ENCODE measurements at regions of chr2 and their contacts with region 1.

Region 1: DNA sequence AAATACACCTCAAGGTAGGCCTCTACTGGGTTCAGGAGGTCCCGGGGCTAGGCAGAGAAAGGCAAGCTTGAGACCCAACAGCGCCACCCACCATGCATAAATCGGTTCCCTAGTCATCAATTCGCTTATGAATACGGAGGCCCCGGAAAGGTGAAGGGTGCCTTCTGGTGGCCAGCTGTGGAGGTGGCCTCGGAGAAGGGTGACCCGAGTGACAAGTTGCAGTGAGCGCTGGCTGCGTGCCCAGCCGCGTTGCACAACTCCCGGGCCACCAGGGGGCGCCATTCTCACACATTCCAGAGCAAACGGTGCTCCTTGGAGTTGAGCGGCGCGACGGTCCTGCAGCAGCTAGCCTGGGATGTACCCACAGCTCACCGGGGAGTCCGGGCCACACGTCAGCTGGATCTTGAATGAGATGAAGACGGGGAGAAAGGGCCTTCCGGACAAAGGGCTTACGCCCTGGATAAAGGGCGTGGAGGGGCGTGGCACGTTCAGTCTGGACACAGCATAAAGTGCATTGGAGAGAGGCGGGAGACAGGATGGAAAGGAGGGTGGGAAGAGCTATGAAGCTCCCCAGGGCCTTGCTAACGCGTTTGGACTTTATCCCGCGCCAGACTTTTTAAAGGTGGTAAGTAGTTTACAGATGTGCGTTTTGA is 20.4 kb downstream of the TMSB10 start:
- DNase-seq: peak; percentile 99
- H3K4me3 ChIP-seq: peak overlapping the region; percentile 39 to 60 (median 43)
- H3K27ac ChIP-seq: peak overlapping the region; percentile 22 to 65 (median 45)
- H3K4me1 ChIP-seq: peaks cover 16 to 30% (median 22%) of the 10 kb centered on the region in 4 donors
- H3K27me3 ChIP-seq: no peaks in the 10 kb centered on the region
- CTCF ChIP-seq: peak; percentile 87 to 95 (median 90)
- EP300 ChIP-seq: no peak
- POLR2A ChIP-seq: no peak

Region 2: DNA sequence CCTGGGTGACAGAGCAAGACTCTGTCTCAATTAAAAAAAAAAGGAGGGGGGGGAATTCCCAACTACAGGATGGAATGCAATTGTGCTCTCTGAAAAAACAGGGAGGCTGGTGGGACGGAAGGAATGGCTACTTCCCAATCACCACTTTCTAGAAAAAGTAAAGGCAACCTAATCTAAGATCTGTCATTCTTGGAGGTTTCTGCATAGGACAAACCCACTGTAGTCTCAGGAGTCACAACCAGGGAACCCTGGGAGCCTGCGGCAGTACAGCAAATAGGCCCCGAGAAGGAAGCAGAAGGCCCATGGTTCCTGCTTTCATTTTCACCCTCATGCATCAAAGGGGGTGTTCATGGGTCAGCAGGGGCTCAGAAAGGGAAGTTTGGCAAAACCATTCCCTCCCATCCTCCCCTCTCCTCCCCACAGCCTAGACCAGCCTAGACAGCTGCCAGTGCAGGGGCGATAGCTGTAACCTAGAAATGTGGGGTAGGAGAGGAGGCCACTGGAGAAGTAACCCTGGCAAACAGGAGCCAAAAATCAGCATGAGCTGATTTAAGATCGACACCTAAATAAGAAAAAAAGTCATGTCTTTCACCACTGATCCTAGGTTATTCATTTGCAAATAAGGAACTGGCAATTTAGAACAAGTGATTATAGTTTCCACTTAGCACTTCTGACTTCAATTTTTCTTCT is 92.9 kb before region 1 on chr2:
- intact Hi-C with region 1: no loop called
- DNase-seq: no peak
- H3K4me3 ChIP-seq: no peak overlapping the region
- H3K27ac ChIP-seq: no peak overlapping the region
- H3K4me1 ChIP-seq: no peaks in the 10 kb centered on the region
- H3K27me3 ChIP-seq: no peaks in the 10 kb centered on the region
- CTCF ChIP-seq: no peak
- EP300 ChIP-seq: no peak
- POLR2A ChIP-seq: no peak

Region 3: DNA sequence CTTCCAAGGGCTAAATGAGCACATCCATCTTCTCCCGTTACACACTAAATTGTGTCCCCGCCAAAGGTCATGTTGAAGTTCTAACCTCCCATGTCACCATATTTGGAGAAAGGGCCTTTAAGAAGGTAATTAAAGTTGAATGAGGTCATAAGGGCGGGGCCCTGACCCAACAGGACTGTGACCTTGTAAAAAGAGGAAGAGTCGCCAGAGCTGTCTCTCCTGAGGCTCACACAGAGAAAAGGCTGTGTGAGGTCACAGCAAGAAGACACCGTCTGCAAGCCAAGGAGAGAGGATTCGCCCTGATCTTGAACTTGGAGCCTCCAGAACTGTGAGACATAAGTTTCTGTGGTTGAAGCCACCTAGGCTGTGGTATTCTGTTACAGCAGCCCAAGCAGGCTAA is 69.1 kb before region 1 on chr2:
- intact Hi-C with region 1: no loop called
- DNase-seq: no peak
- H3K4me3 ChIP-seq: no peak overlapping the region
- H3K27ac ChIP-seq: no peak overlapping the region
- H3K4me1 ChIP-seq: no peaks in the 10 kb centered on the region
- H3K27me3 ChIP-seq: peaks cover 0 to 7% (median 0%) of the 10 kb centered on the region in 4 donors
- CTCF ChIP-seq: no peak
- EP300 ChIP-seq: no peak
- POLR2A ChIP-seq: no peak

Region 4: DNA sequence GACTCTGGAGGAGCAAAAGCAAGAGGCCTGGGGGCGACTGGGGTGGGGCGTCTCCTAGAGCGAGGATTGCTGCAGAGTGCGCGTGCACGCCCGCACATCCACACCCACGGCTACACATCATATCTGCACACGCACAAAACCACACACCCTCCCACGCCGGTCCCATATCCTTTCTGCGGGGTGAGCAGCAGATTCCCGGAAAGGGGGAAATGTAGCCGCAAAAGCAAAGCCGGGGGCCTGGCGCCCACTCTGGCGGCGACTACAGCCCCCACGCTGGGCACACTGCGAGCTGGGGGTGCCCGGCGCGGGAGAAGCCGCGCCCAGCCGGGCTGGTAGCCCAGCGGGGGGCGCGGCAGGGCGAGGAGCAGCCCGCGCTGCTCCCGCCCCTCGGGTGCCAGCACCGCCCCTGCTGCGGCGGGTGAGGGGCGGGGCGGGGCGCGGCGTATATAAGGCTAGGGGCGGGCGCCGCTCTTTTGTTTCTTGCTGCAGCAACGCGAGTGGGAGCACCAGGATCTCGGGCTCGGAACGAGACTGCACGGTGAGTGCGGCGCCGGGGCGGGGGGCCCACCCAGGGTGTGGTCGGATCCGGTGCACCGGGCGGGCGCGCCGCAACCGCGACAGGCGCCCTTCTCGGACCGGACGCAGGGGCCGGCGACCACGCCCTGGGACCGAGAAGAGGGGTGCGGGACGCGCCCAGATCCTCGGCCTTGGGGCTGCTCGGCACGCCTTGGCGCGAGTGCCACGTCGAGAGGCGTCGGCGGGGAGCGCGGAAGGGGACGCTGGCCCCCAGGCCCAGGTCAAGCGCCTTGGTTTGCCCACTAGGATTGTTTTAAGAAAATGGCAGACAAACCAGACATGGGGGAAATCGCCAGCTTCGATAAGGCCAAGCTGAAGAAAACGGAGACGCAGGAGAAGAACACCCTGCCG is 20.4 kb before region 1 on chr2 and contains the start of gene TMSB10:
- intact Hi-C with region 1: loop called (anchors 1 kb)
- DNase-seq: peak; percentile 97
- H3K4me3 ChIP-seq: peak within 1 kb of the TSS; percentile 73 to 97 (median 92)
- H3K27ac ChIP-seq: peak within 1 kb of the TSS; percentile 88 to 96 (median 94)
- H3K4me1 ChIP-seq: peaks cover 11 to 25% (median 19%) of the 10 kb centered on the region in 4 donors
- H3K27me3 ChIP-seq: no peaks in the 10 kb centered on the region
- CTCF ChIP-seq: peak in 2 of 3 experiments; percentile 9 to 27
- EP300 ChIP-seq: peak; percentile 41
- POLR2A ChIP-seq: peak; percentile 93
- total RNA-seq, gene TMSB10: 1,300 to 2,755 (median 1,711) TPM

Measured in esophagus muscularis mucosa (tissue), 4 donors.